Endothelial cell of umbilical vein (primary cell): ENCODE measurements at regions of chr14 and their contacts with region 1.

Region 1: GRCh38 chr14:22994762-22995275 is 12.5 kb upstream of the AJUBA start:
- DNase-seq: peak; percentile 49
- H3K4me3 ChIP-seq: no peak overlapping the region
- H3K27ac ChIP-seq: no peak overlapping the region
- H3K4me1 ChIP-seq: peaks cover 4% of the 10 kb centered on the region
- H3K27me3 ChIP-seq: no peaks in the 10 kb centered on the region
- CTCF ChIP-seq: peak; percentile 54 to 64
- POLR2A ChIP-seq: no peak

Region 2: GRCh38 chr14:23006544-23007419 is 12.0 kb after region 1 on chr14:
- CTCF ChIA-PET with region 1: interaction called, 69 read pairs
- POLR2A ChIA-PET with region 1: no interaction called
- dilution Hi-C with region 1: no loop called
- intact Hi-C with region 1: no loop called
- DNase-seq: peak; percentile 99
- H3K4me3 ChIP-seq: peak overlapping the region; percentile 38 to 78 (median 56)
- H3K27ac ChIP-seq: peak overlapping the region; percentile 89
- H3K4me1 ChIP-seq: peaks cover 29% of the 10 kb centered on the region
- H3K27me3 ChIP-seq: no peaks in the 10 kb centered on the region
- CTCF ChIP-seq: peak; percentile 7 to 34
- POLR2A ChIP-seq: peak; percentile 97

Region 3: GRCh38 chr14:23041729-23042128 is 46.9 kb after region 1 on chr14:
- CTCF ChIA-PET with region 1: interaction called, 33 read pairs
- POLR2A ChIA-PET with region 1: interaction called, 3 read pairs
- dilution Hi-C with region 1: no loop called
- intact Hi-C with region 1: loop called (anchors 2 kb)
- DNase-seq: no peak
- H3K4me3 ChIP-seq: no peak overlapping the region
- H3K27ac ChIP-seq: no peak overlapping the region
- H3K4me1 ChIP-seq: peaks cover 31% of the 10 kb centered on the region
- H3K27me3 ChIP-seq: no peaks in the 10 kb centered on the region
- CTCF ChIP-seq: no peak
- POLR2A ChIP-seq: no peak

Region 4: DNA sequence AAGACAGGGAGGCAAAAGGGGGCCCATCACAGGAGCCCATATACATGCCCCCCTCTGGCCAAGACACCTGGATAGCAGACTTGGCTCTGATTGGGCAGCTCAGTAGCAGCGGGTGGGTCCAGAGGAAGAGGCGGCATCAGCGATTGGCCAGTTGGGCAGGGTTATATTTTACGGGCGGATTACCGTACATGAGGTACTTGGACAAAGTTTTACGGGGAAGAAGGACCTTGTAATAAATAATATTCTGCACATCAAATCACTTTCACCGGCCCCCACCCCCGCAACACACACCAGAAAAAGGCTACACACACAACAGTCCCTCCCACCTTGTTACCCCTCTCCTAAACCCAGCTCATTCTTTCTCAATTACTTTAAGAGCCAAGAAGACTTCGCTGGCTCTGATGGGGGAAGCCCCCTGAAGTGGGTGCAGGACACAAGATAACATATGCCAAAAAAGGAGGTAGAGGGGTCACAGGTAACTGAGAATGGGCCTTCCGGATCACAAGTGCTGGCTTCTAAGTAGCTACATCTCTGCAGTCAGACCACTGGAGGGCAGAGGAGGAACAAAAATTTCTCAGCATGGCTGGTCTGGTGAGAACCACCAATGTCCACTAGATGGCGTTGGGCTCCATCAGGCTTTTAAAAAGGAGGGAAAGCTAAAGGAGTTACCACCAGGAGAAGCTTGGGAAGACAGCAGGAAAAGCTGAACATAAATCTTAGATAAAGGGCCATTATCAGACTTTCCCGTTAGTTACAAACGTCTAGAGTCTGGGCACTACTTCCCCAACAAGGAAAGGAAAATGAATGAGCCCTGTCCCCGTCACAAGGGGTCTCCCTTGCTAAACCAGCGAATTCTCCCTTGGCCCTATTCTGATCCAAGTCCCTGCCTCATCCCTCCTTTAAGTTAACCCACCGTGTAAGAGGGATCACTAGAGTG is 73.9 kb after region 1 on chr14:
- CTCF ChIA-PET with region 1: interaction called, 1,071 read pairs
- POLR2A ChIA-PET with region 1: no interaction called
- dilution Hi-C with region 1: no loop called
- intact Hi-C with region 1: no loop called
- DNase-seq: peak; percentile 97
- H3K4me3 ChIP-seq: no peak overlapping the region
- H3K27ac ChIP-seq: peak overlapping the region; percentile 35
- H3K4me1 ChIP-seq: peaks cover 28% of the 10 kb centered on the region
- H3K27me3 ChIP-seq: no peaks in the 10 kb centered on the region
- CTCF ChIP-seq: peak; percentile 93 to 100
- POLR2A ChIP-seq: no peak

Region 5: GRCh38 chr14:23104591-23105347 is 110.0 kb after region 1 on chr14 and contains the start of gene CIROP:
- CTCF ChIA-PET with region 1: interaction called, 23 read pairs
- POLR2A ChIA-PET with region 1: no interaction called
- dilution Hi-C with region 1: no loop called
- intact Hi-C with region 1: loop called (anchors 5 kb)
- DNase-seq: no peak
- H3K4me3 ChIP-seq: no peak within 1 kb of the TSS
- H3K27ac ChIP-seq: no peak within 1 kb of the TSS
- H3K4me1 ChIP-seq: no peaks in the 10 kb centered on the region
- H3K27me3 ChIP-seq: no peaks in the 10 kb centered on the region
- CTCF ChIP-seq: no peak
- POLR2A ChIP-seq: no peak
- total RNA-seq, gene CIROP: not detected in 2 replicates